ENCODE measurements at regions of chr5 and their contacts with region 1.

Region 1: DNA sequence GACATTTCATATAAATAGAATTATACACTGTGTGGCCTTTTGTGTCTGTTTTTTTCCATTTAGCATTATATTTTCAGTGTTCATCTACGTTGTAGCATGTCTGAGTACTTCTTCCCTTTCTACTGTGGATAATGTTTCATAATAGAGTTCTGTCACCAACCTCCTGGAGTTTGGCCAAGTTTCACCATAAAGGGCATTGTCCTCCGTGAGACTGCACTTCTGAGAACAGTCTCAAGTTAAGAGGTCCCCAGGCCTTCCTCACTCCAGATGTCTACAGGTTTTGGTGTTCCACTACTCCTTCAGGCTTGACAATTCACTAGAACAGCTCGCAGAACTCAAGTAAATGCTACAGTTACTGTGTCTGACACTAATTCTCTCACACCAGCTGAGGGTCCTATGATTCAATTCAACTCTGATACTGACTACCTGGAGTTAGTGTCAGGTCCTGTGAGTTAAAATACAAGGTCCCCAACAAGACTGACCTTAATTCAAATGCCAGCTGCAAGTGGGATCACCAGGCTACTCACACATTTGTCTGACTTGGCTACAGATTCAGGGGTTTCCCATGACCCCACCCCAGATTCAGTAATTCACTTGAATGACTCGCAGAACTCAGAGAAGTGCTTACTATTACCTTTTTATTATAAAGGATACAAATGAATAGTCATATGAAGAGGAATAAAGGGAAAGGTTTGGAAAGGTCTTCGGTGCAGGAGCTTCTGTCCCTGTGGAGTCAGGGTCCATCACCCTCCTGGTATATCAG is 31.1 kb downstream of the SLC35A4 start:
- DNase-seq: no peak
- ATAC-seq: peak; percentile 75 to 92 (median 83)
- H3K4me3 ChIP-seq: no peak overlapping the region
- H3K27ac ChIP-seq: peak overlapping the region; percentile 34
- H3K4me1 ChIP-seq: no peaks in the 10 kb centered on the region
- H3K27me3 ChIP-seq: no peaks in the 10 kb centered on the region
- CTCF ChIP-seq: no peak

Region 2: DNA sequence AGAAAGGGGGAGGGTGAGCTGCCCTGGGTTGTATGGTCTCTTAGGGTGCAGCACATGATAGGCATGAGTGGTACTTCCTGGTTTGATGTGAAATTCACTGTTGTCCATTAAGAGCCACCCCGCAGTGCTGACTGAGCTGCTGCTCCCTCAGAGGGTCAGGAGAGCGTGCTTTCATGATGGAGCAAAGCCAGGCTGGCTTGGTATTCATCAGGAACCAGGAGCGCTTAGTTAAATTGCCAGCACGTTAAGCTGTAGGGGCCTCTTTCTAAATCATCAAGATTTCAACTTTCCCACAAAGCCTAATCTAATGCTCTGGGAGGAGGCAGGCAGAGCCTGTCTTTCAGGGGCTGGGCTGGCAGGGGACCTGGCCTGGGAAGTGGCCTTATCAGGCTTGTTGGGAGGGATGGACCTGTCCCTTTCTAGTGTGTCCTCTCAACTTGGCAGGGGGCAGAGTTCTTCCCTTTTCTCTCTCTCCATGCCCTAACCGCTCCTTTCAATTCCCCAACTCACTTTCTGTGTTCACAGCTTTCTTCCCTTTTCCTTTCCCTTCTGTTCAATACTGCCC is 412.8 kb before region 1 on chr5:
- intact Hi-C with region 1: no loop called
- DNase-seq: peak; percentile 28 to 54
- ATAC-seq: peak; percentile 23 to 40 (median 37)
- H3K4me3 ChIP-seq: no peak overlapping the region
- H3K27ac ChIP-seq: peak overlapping the region; percentile 100
- H3K4me1 ChIP-seq: peaks cover 82% of the 10 kb centered on the region
- H3K27me3 ChIP-seq: no peaks in the 10 kb centered on the region
- CTCF ChIP-seq: no peak

Region 3: GRCh38 chr5:140488914-140489313 is 106.8 kb before region 1 on chr5:
- intact Hi-C with region 1: no loop called
- DNase-seq: no peak
- ATAC-seq: no peak
- H3K4me3 ChIP-seq: no peak overlapping the region
- H3K27ac ChIP-seq: no peak overlapping the region
- H3K4me1 ChIP-seq: no peaks in the 10 kb centered on the region
- H3K27me3 ChIP-seq: no peaks in the 10 kb centered on the region
- CTCF ChIP-seq: no peak

Region 4: GRCh38 chr5:140513124-140513523 is 82.6 kb before region 1 on chr5:
- intact Hi-C with region 1: no loop called
- DNase-seq: no peak
- ATAC-seq: no peak
- H3K4me3 ChIP-seq: no peak overlapping the region
- H3K27ac ChIP-seq: no peak overlapping the region
- H3K4me1 ChIP-seq: no peaks in the 10 kb centered on the region
- H3K27me3 ChIP-seq: no peaks in the 10 kb centered on the region
- CTCF ChIP-seq: no peak

Region 5: DNA sequence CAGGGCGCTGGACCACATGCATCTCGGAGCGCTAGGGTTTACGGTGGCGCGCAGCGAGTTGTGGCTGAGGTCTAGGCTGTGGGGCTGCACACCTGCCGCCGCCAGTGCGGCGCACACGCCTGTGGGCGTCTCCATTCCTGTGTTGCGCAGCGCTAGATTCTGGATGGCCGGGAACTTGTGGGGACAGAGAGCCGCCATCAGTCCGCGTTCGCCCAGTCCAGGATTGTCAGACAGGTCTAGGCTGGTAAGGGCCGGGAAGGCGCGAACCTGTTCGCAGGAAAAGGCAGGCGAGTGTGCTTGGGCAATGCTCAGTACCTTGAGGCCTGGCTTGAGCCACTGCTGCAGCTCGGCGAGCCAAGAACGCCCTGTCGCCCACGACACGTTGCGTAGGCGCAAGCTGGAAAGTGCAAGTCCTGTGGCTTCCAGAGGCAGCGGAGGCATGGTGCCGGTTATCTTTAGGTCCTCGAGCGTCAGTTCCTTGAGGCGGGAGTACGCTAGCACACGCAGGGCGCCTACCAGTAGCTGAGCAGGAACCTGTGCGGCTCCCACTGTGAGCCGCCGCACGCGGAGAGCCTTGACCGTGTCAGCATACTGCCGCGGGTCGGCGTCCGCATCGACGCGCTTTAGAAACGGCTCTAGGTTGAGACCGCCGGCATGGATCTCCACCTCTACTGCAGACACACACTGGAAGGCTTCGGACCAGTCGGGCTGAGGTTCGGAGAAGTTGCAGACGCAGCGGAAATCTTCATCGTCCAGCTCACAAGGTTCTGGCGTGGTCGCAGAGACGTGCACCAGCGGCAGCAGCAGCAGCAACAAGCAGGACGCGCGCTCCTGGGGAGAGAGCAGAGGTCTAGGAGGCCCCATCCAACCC is 36.7 kb after region 1 on chr5:
- intact Hi-C with region 1: loop called in 1 of 2 experiments (anchors 5 kb)
- DNase-seq: peak; percentile 68 to 80
- ATAC-seq: peak; percentile 72 to 82 (median 78)
- H3K4me3 ChIP-seq: peak overlapping the region; percentile 75
- H3K27ac ChIP-seq: peak overlapping the region; percentile 76
- H3K4me1 ChIP-seq: peaks cover 5% of the 10 kb centered on the region
- H3K27me3 ChIP-seq: no peaks in the 10 kb centered on the region
- CTCF ChIP-seq: no peak

Region 6: GRCh38 chr5:141003931-141004611 is 408.4 kb after region 1 on chr5:
- intact Hi-C with region 1: no loop called
- DNase-seq: no peak
- ATAC-seq: no peak
- H3K4me3 ChIP-seq: no peak overlapping the region
- H3K27ac ChIP-seq: no peak overlapping the region
- H3K4me1 ChIP-seq: no peaks in the 10 kb centered on the region
- H3K27me3 ChIP-seq: peaks cover 2 to 18% (median 5%) of the 10 kb centered on the region in 3 donors
- CTCF ChIP-seq: no peak

Measured in psoas muscle (tissue), 8 donors.